ENCODE measurements at regions of chr3 and their contacts with region 1.

Region 1: DNA sequence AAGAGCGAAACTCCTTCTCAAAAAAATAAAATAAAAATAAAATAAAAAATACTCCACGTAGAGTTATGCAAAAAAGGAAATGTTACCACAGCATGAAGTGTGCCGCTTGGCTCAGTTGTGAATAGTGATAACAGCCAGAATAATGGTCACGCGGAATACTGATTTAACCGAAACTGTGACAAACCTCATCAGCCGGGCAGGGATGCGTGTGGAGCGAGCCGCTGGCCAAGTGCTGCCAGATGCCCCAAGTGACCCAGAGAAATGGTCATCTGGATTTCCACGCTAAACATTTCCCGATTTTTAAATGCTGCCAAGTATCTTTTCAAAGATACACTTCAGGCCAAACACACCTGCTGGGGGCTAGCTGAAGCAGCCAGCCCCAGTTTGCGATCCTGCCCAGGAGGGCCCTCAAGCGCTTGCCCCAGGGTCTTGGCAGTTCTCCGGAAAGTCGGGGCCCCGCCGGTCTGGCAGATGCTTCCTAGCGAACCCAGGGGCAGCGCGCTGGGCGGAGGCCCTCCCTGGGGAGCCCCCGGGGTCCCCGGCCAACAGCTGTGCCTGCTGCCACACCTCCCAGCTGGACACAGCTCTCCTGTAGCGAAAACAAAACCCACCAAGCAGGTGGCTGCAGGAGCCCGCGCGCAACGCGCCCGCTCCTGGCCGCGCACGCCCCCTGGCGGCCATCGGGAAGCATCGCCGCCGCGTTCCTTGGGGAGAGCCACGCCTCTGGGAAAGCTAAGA is 35.1 kb downstream of the CMTM6 start:
- DNase-seq: peak; percentile 64
- H3K4me3 ChIP-seq: peak overlapping the region in 1 of 3 experiments; percentile 33
- H3K27ac ChIP-seq: peak overlapping the region; percentile 23
- H3K4me1 ChIP-seq: peaks cover 55% of the 10 kb centered on the region
- H3K27me3 ChIP-seq: no peaks in the 10 kb centered on the region
- CTCF ChIP-seq: peak; percentile 93 to 98

Region 2: DNA sequence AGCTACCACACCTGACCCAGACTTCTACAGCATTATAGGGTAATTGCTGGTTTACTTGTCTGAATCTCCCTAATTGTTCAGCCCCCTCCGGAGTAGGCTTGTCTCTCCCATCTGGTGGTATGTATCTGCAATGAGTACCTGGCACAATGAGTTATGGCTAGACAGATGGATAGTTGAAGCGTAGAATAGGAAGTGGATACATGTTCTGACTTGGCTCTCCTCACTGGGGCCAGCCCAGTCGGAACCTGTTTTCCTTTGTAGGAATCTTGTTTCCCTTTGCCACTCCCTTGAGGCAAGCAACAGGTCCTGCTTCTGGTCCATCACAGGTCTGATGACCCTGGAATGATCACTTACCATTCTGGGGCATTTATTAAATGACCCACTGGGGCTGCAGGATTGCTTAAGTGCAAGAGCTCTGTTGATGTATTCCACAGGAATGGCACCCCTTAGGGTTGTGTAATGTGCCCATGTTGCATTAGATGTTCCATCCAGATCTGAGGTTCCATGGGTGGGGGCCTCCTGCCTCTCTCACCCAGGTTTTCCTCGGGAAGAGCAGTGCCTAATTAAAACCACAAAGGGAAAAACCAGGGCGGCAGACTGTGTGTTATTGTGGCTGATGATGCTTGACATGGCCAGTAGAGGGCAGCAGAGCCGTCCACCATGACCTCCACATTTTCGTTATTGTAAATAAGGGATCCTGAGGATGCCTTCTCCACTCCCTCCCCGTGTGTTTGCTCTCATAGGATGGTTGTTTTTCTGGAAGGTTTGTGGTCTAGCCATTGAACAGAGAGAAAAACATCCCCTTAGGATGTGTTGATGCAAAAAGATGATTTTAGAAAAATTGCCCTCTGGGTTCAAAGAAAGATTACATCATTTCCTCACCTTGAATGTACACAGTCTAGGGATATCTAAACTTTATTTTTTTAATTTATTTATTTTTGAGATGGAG is 171.0 kb before region 1 on chr3:
- CTCF ChIA-PET with region 1: no interaction called
- dilution Hi-C with region 1: no loop called
- in situ Hi-C with region 1: no loop called
- intact Hi-C with region 1: loop called (anchors 2 kb)
- DNase-seq: peak; percentile 75
- H3K4me3 ChIP-seq: no peak overlapping the region
- H3K27ac ChIP-seq: no peak overlapping the region
- H3K4me1 ChIP-seq: peaks cover 14% of the 10 kb centered on the region
- H3K27me3 ChIP-seq: no peaks in the 10 kb centered on the region
- CTCF ChIP-seq: peak; percentile 85 to 95

Region 3: DNA sequence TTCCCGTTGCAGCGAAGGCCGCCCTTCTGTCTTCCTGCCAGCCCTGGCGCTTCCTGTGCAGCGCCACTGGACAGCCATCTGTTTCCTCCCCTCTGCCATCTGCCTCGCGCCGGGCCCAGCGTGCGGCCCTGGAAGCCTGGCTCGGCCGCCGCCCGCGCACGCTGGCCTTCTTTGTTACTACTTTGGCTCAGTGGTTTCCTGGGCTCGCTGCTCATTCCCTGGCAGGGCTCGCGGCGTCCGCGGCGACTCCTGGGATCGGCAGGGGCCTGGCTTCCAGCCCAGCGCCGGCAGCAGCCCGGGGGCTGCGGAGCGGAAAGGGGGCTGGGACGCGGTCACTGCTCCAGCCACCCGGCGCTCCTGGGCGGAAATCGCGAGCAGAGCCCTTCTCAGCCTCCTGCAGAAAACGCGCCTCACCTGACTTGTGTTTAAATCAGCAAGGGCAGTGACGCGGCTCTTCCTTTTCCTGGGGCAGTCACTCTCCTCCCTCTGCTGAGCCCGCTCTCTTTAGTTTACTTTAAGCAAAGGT is 65.9 kb before region 1 on chr3:
- CTCF ChIA-PET with region 1: interaction called, 4 read pairs
- dilution Hi-C with region 1: no loop called
- in situ Hi-C with region 1: no loop called
- intact Hi-C with region 1: loop called (anchors 1 kb)
- DNase-seq: peak; percentile 71
- H3K4me3 ChIP-seq: peak overlapping the region; percentile 37 to 45 (median 40)
- H3K27ac ChIP-seq: peak overlapping the region; percentile 66
- H3K4me1 ChIP-seq: peaks cover 61% of the 10 kb centered on the region
- H3K27me3 ChIP-seq: no peaks in the 10 kb centered on the region
- CTCF ChIP-seq: no peak

Region 4: GRCh38 chr3:32414520-32415202 is 52.8 kb before region 1 on chr3:
- CTCF ChIA-PET with region 1: no interaction called
- dilution Hi-C with region 1: loop called (anchors 5 kb)
- in situ Hi-C with region 1: no loop called
- intact Hi-C with region 1: no loop called
- DNase-seq: peak; percentile 70
- H3K4me3 ChIP-seq: no peak overlapping the region
- H3K27ac ChIP-seq: peak overlapping the region; percentile 59
- H3K4me1 ChIP-seq: peaks cover 59% of the 10 kb centered on the region
- H3K27me3 ChIP-seq: no peaks in the 10 kb centered on the region
- CTCF ChIP-seq: no peak

Region 5: DNA sequence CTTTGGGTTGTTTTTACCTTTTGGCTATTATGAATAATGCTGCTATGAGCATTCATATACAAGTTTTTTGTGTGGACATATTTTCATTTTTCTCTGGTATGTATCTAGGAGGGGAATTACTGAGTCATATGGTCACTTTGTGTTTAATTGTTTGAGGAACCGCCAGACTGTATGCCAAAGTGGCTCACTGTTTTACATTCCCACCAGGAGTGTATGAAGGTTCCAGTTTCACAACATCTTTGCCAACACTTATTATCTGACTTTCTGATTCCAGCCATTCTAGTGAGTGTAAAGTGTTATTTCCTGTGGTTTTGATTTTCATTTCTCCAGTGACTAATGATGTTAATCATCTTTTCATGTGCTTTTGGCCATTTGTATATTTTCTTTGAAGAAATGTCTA is 24.0 kb before region 1 on chr3:
- CTCF ChIA-PET with region 1: no interaction called
- dilution Hi-C with region 1: no loop called
- in situ Hi-C with region 1: no loop called
- intact Hi-C with region 1: loop called (anchors 2 kb)
- DNase-seq: peak; percentile 96
- H3K4me3 ChIP-seq: no peak overlapping the region
- H3K27ac ChIP-seq: peak overlapping the region; percentile 59
- H3K4me1 ChIP-seq: peaks cover 53% of the 10 kb centered on the region
- H3K27me3 ChIP-seq: no peaks in the 10 kb centered on the region
- CTCF ChIP-seq: no peak

Region 6: DNA sequence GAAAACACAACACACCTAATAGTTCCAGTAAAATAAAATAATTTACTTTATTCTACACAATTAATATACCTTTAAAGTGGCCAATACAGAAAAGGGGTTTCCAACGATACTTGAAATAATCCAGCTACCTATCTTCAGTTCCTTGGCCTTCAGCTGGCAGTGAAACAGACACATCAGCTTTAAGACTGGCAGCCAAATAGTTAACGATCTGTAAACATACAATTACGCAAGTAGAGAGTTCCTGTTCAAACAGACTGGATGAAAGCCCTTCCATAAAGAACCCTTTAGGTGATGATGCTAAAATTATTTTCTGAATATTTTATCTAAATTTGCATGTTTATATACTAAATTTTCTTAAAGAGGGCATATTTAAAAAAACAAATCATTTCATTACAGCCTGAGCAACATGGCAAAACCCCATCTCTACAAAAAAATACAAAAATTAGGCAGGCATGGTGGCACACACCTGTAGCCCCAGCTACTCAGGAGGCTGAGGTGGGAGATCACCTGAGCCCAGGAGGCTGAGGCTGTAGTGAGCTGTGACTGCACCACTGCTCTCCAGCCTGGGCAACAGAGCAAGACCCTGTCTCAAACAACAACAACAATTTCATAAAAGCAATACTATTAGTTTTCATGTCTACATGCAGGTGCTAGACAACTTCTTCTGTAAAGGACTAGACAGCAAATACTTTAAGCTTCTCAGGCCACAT is 90.3 kb after region 1 on chr3:
- CTCF ChIA-PET with region 1: no interaction called
- dilution Hi-C with region 1: loop called (anchors 5 kb)
- in situ Hi-C with region 1: no loop called
- intact Hi-C with region 1: no loop called
- DNase-seq: no peak
- H3K4me3 ChIP-seq: no peak overlapping the region
- H3K27ac ChIP-seq: no peak overlapping the region
- H3K4me1 ChIP-seq: no peaks in the 10 kb centered on the region
- H3K27me3 ChIP-seq: no peaks in the 10 kb centered on the region
- CTCF ChIP-seq: no peak

Measured in mammary epithelial cell (primary cell).